ENCODE measurements at regions of chr18 and their contacts with region 1.

Region 1: GRCh38 chr18:63831080-63831788 is 56.0 kb downstream of the SERPINB7 start:
- DNase-seq: no peak
- ATAC-seq: no peak
- H3K4me3 Mint-ChIP-seq: no peak overlapping the region
- H3K27ac Mint-ChIP-seq: no peak overlapping the region
- H3K4me1 Mint-ChIP-seq: no peaks in the 10 kb centered on the region
- H3K27me3 Mint-ChIP-seq: peaks cover 23% of the 10 kb centered on the region

Region 2: DNA sequence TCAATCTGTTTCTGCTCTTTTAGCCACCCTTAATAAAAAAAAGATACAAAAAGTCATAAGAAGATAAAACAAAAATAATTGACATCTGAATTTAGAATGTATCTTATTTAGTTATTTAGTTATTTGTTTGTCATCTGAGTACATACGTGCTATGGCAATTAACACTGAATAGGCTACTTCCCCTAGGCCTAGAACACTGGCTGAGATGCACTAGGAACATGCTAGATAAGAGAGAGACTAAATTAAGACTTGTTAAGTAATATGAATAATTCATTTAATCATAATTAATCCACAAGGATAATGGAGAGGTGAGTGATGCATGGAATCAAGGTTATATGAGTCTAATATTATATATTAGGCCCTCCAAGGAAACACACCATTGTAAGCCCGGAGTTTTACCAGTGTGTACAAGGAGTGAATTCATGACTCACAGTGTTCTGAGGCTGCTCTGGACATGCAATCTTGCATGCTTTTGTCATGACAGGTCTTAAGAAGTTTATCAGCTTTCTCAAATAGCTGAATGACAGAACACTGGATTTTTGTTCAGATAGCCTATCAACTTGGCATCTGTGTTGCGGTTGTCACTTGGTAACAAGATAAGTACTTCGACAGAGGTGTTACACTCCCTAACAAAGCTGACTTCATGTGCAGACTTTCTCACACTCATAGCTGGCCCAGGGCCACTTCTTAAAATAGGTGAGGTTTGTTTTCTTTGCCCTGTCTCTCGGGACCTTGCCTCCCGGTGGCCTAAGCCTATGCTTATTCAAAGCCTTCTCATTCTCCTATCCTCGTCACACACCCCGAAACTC is 51.3 kb after region 1 on chr18:
- CTCF ChIA-PET with region 1: no interaction called
- POLR2A ChIA-PET with region 1: no interaction called
- intact Hi-C with region 1: loop called in 1 of 2 experiments (anchors 5 kb)
- DNase-seq: no peak
- ATAC-seq: peak; percentile 24
- H3K4me3 Mint-ChIP-seq: no peak overlapping the region
- H3K27ac Mint-ChIP-seq: no peak overlapping the region
- H3K4me1 Mint-ChIP-seq: peaks cover 12% of the 10 kb centered on the region
- H3K27me3 Mint-ChIP-seq: peaks cover 5% of the 10 kb centered on the region

Region 3: GRCh38 chr18:63909870-63910269 is 78.6 kb after region 1 on chr18:
- CTCF ChIA-PET with region 1: no interaction called
- POLR2A ChIA-PET with region 1: no interaction called
- intact Hi-C with region 1: no loop called
- DNase-seq: no peak
- ATAC-seq: peak; percentile 33
- H3K4me3 Mint-ChIP-seq: no peak overlapping the region
- H3K27ac Mint-ChIP-seq: no peak overlapping the region
- H3K4me1 Mint-ChIP-seq: peaks cover 3% of the 10 kb centered on the region
- H3K27me3 Mint-ChIP-seq: peaks cover 24% of the 10 kb centered on the region

Region 4: DNA sequence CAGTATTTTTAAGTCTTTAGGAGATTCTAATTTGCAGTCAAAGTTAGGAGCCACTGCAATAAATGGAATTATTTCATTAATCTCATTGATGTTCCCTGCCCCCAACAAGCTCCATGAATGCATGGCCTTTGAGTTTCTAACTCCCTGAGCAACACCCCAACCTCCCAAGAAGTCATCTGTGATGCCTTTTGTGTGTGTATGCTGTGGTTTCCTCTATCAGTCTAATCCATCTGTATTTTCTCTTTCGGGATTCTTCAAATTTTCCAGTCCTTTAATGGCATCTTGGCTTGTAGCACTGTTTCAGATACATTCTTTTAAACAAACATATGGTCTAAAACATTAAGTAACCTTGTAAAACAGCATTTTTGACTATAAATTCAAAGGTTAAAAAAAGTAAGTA is 93.3 kb after region 1 on chr18:
- CTCF ChIA-PET with region 1: no interaction called
- POLR2A ChIA-PET with region 1: no interaction called
- intact Hi-C with region 1: no loop called
- DNase-seq: no peak
- ATAC-seq: no peak
- H3K4me3 Mint-ChIP-seq: no peak overlapping the region
- H3K27ac Mint-ChIP-seq: no peak overlapping the region
- H3K4me1 Mint-ChIP-seq: no peaks in the 10 kb centered on the region
- H3K27me3 Mint-ChIP-seq: peaks cover 31% of the 10 kb centered on the region